ENCODE measurements at regions of chr20 and their contacts with region 1.

Region 1: DNA sequence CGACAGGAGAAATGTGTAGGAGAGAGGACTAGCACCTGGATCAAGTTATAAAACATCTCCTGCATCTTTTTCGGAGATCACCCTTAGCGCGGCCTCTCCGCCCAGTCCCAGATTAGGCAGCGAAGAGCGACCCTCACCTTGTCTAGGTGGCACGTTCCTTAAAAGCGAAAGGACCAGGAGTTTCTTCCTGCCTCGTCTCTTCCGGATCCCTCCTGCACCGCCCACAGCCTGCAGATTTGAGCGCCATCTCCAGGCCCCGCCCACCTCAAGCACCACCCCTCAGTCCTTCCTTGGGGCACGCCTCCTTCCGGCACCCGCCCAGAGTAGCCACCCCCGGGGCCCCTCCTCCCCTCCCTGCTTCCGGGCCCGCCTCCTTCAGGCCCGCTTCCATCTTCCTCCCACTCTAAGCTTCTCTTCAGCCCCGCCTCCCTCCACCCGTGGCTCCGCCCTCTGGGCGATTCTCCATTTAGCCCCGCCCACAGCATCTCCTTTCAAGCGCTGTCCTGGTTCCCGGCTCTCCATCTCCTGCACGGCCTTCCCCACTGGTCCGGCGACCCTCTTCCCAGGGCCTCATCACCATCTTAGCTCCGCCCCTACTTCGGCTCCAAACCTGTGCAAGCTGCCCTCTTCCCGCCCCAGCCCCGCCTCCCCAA is 662 bp upstream of the RALY start:
- DNase-seq: peak; percentile 100
- H3K4me3 ChIP-seq: peak overlapping the region; percentile 88
- H3K4me3 Mint-ChIP-seq: peak overlapping the region; percentile 76
- H3K27ac Mint-ChIP-seq: peak overlapping the region; percentile 89
- H3K4me1 ChIP-seq: peaks cover 17% of the 10 kb centered on the region
- H3K4me1 Mint-ChIP-seq: peaks cover 3% of the 10 kb centered on the region
- H3K27me3 ChIP-seq: no peaks in the 10 kb centered on the region
- H3K27me3 Mint-ChIP-seq: no peaks in the 10 kb centered on the region
- CTCF ChIP-seq: no peak

Region 2: DNA sequence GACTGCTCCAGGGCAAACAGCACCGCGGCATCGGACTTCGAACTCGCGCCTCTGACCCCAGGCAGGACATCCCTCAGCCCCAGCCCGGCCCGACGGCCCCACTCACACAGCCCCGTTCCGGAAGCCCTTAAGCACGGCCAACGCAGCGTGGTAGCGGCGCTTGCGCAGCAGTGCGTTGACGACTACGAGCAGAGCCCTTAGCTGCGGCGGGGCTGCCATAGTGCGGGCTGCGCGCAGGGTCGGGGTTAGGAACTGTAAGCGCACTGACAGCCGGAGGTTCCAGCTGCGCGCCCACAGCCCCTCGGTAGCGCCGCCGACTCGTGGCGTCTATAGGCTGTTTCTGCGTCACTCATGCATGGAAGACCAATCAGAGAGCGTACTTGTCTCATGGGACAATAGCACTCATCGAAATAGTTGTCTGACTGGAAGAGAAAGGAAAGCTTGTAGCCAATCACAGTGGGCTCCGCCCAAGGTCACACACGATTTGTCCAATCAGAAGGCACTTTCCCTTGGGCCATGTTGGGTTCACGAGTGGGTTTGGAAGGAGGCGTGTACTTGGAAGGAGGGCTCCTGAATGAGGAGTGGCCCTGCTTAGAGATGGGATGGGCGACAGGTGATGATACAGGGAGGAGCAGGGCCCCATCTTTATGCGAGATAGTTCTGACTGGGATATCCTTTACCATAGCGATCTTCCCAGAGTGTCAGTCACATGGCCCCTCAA is 272.9 kb before region 1 on chr20 and contains the start of gene PXMP4:
- CTCF ChIA-PET with region 1: interaction called, 4 read pairs
- POLR2A ChIA-PET with region 1: interaction called, 13 read pairs
- intact Hi-C with region 1: no loop called
- DNase-seq: peak; percentile 99 to 100
- H3K4me3 ChIP-seq: peak within 1 kb of the TSS; percentile 65
- H3K4me3 Mint-ChIP-seq: peak within 1 kb of the TSS; percentile 71
- H3K27ac Mint-ChIP-seq: peak within 1 kb of the TSS; percentile 33
- H3K4me1 ChIP-seq: peaks cover 22% of the 10 kb centered on the region
- H3K4me1 Mint-ChIP-seq: no peaks in the 10 kb centered on the region
- H3K27me3 ChIP-seq: no peaks in the 10 kb centered on the region
- H3K27me3 Mint-ChIP-seq: no peaks in the 10 kb centered on the region
- CTCF ChIP-seq: no peak
- total RNA-seq, gene PXMP4: 37.3 and 39.5 TPM in 2 replicates

Region 3: GRCh38 chr20:33810885-33811777 is 181.9 kb before region 1 on chr20 and contains the start of gene CHMP4B:
- CTCF ChIA-PET with region 1: interaction called, 6 read pairs
- POLR2A ChIA-PET with region 1: interaction called, 12 read pairs
- intact Hi-C with region 1: loop called (anchors 2 kb)
- DNase-seq: peak; percentile 100
- H3K4me3 ChIP-seq: peak within 1 kb of the TSS; percentile 49
- H3K4me3 Mint-ChIP-seq: peak within 1 kb of the TSS; percentile 97
- H3K27ac Mint-ChIP-seq: peak within 1 kb of the TSS; percentile 96
- H3K4me1 ChIP-seq: peaks cover 34% of the 10 kb centered on the region
- H3K4me1 Mint-ChIP-seq: peaks cover 28% of the 10 kb centered on the region
- H3K27me3 ChIP-seq: no peaks in the 10 kb centered on the region
- H3K27me3 Mint-ChIP-seq: no peaks in the 10 kb centered on the region
- CTCF ChIP-seq: no peak
- total RNA-seq, gene CHMP4B: 190 and 203 TPM in 2 replicates

Region 4: GRCh38 chr20:33981964-33982363 is 11.1 kb before region 1 on chr20:
- CTCF ChIA-PET with region 1: interaction called, 4 read pairs
- POLR2A ChIA-PET with region 1: interaction called, 15 read pairs
- intact Hi-C with region 1: no loop called
- DNase-seq: peak in 1 of 2 experiments; percentile 33
- H3K4me3 ChIP-seq: no peak overlapping the region
- H3K4me3 Mint-ChIP-seq: no peak overlapping the region
- H3K27ac Mint-ChIP-seq: no peak overlapping the region
- H3K4me1 ChIP-seq: no peaks in the 10 kb centered on the region
- H3K4me1 Mint-ChIP-seq: no peaks in the 10 kb centered on the region
- H3K27me3 ChIP-seq: no peaks in the 10 kb centered on the region
- H3K27me3 Mint-ChIP-seq: peaks cover 4% of the 10 kb centered on the region
- CTCF ChIP-seq: no peak

Region 5: GRCh38 chr20:34069341-34070078 is 76.5 kb after region 1 on chr20:
- CTCF ChIA-PET with region 1: interaction called, 14 read pairs
- POLR2A ChIA-PET with region 1: interaction called, 5 read pairs
- intact Hi-C with region 1: loop called (anchors 1 kb)
- DNase-seq: peak; percentile 86 to 91
- H3K4me3 ChIP-seq: no peak overlapping the region
- H3K4me3 Mint-ChIP-seq: no peak overlapping the region
- H3K27ac Mint-ChIP-seq: no peak overlapping the region
- H3K4me1 ChIP-seq: no peaks in the 10 kb centered on the region
- H3K4me1 Mint-ChIP-seq: no peaks in the 10 kb centered on the region
- H3K27me3 ChIP-seq: no peaks in the 10 kb centered on the region
- H3K27me3 Mint-ChIP-seq: no peaks in the 10 kb centered on the region
- CTCF ChIP-seq: peak; percentile 97 to 99

Region 6: GRCh38 chr20:34397096-34397495 is 404.0 kb after region 1 on chr20:
- CTCF ChIA-PET with region 1: no interaction called
- POLR2A ChIA-PET with region 1: no interaction called
- intact Hi-C with region 1: no loop called
- DNase-seq: no peak
- H3K4me3 ChIP-seq: no peak overlapping the region
- H3K4me3 Mint-ChIP-seq: no peak overlapping the region
- H3K27ac Mint-ChIP-seq: no peak overlapping the region
- H3K4me1 ChIP-seq: peaks cover 3% of the 10 kb centered on the region; the same call in 1 of the 2 replicates
- H3K4me1 Mint-ChIP-seq: peaks cover 29% of the 10 kb centered on the region
- H3K27me3 ChIP-seq: no peaks in the 10 kb centered on the region
- H3K27me3 Mint-ChIP-seq: no peaks in the 10 kb centered on the region
- CTCF ChIP-seq: no peak

Region 7: GRCh38 chr20:35741892-35742740 is 1749.1 kb after region 1 on chr20 and contains the start of gene RBM39:
- CTCF ChIA-PET with region 1: no interaction called
- POLR2A ChIA-PET with region 1: interaction called, 10 read pairs
- intact Hi-C with region 1: no loop called
- DNase-seq: peak; percentile 100
- H3K4me3 ChIP-seq: peak within 1 kb of the TSS; percentile 77
- H3K4me3 Mint-ChIP-seq: peak within 1 kb of the TSS; percentile 80
- H3K27ac Mint-ChIP-seq: peak within 1 kb of the TSS; percentile 96
- H3K4me1 ChIP-seq: peaks cover 31% of the 10 kb centered on the region
- H3K4me1 Mint-ChIP-seq: peaks cover 34% of the 10 kb centered on the region
- H3K27me3 ChIP-seq: no peaks in the 10 kb centered on the region
- H3K27me3 Mint-ChIP-seq: no peaks in the 10 kb centered on the region
- CTCF ChIP-seq: peak; percentile 52 to 65
- total RNA-seq, gene RBM39: 750 and 777 TPM in 2 replicates